ENCODE measurements at regions of chr14 and their contacts with region 1.

Region 1: GRCh38 chr14:49173765-49174373 is 412.3 kb downstream of the RPS29 start:
- DNase-seq: peak; percentile 69
- ATAC-seq: peak; percentile 91
- H3K4me3 ChIP-seq: no peak overlapping the region
- H3K27ac ChIP-seq: no peak overlapping the region
- H3K4me1 ChIP-seq: no peaks in the 10 kb centered on the region
- H3K27me3 ChIP-seq: no peaks in the 10 kb centered on the region
- CTCF ChIP-seq: peak; percentile 69
- POLR2A ChIP-seq: no peak
- RAD21 ChIP-seq: peak; percentile 79

Region 2: GRCh38 chr14:48398675-48399282 is 775.1 kb before region 1 on chr14:
- CTCF ChIA-PET with region 1: no interaction called
- POLR2A ChIA-PET with region 1: no interaction called
- dilution Hi-C with region 1: no loop called
- in situ Hi-C with region 1: no loop called
- intact Hi-C with region 1: loop called (anchors 2 kb)
- DNase-seq: peak; percentile 47
- ATAC-seq: peak; percentile 76
- H3K4me3 ChIP-seq: no peak overlapping the region
- H3K27ac ChIP-seq: no peak overlapping the region
- H3K4me1 ChIP-seq: no peaks in the 10 kb centered on the region
- H3K27me3 ChIP-seq: no peaks in the 10 kb centered on the region
- CTCF ChIP-seq: peak; percentile 59
- POLR2A ChIP-seq: no peak
- RAD21 ChIP-seq: peak; percentile 52

Region 3: GRCh38 chr14:48628870-48629269 is 545.0 kb before region 1 on chr14:
- CTCF ChIA-PET with region 1: no interaction called
- POLR2A ChIA-PET with region 1: no interaction called
- dilution Hi-C with region 1: no loop called
- in situ Hi-C with region 1: no loop called
- intact Hi-C with region 1: loop called (anchors 10 kb)
- DNase-seq: peak; percentile 28
- ATAC-seq: peak; percentile 40
- H3K4me3 ChIP-seq: no peak overlapping the region
- H3K27ac ChIP-seq: no peak overlapping the region
- H3K4me1 ChIP-seq: no peaks in the 10 kb centered on the region
- H3K27me3 ChIP-seq: no peaks in the 10 kb centered on the region
- CTCF ChIP-seq: no peak
- POLR2A ChIP-seq: no peak
- RAD21 ChIP-seq: no peak

Region 4: DNA sequence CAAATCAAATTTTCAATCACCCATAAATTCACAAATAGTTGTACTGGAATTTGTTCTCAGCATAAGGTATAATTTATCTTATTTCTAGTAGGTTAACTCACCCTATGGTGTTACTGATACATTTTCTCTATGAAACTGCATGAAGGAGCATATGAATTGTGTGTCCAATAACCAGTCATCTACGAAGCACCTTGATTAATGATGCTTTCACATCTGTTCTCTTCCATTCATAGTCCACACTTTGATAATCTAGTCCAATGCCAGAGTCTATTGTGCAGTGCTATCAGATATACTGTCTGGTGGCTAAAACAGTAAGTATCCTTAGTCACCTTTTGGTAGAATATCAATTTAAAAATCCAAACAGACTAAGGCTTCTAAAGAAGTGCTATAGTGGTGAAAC is 463.7 kb before region 1 on chr14:
- CTCF ChIA-PET with region 1: no interaction called
- POLR2A ChIA-PET with region 1: no interaction called
- dilution Hi-C with region 1: no loop called
- in situ Hi-C with region 1: no loop called
- intact Hi-C with region 1: no loop called
- DNase-seq: no peak
- ATAC-seq: no peak
- H3K4me3 ChIP-seq: no peak overlapping the region
- H3K27ac ChIP-seq: no peak overlapping the region
- H3K4me1 ChIP-seq: no peaks in the 10 kb centered on the region
- H3K27me3 ChIP-seq: no peaks in the 10 kb centered on the region
- CTCF ChIP-seq: no peak
- POLR2A ChIP-seq: no peak
- RAD21 ChIP-seq: no peak

Region 5: DNA sequence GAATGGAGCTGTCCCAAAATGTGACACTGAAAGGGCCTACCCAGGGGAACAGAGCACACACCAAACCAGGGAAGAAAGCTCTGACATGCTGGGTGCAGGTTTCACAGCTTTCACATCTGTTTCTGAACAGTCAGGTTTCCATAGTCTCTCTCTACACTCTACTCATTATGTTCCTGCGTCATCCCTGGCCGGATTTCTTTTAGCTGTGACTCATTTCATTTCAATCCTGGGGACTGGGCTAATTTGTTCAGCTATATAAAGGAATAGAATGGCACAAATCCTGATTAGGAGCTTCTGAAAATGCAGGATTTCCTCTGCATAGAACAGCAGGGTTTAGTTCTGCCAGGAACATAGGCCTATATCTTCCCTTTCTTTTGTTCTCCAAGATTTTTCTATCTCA is 237.5 kb before region 1 on chr14:
- CTCF ChIA-PET with region 1: no interaction called
- POLR2A ChIA-PET with region 1: no interaction called
- dilution Hi-C with region 1: no loop called
- in situ Hi-C with region 1: no loop called
- intact Hi-C with region 1: loop called (anchors 10 kb)
- DNase-seq: peak; percentile 77
- ATAC-seq: peak; percentile 83
- H3K4me3 ChIP-seq: no peak overlapping the region
- H3K27ac ChIP-seq: peak overlapping the region; percentile 55; the same call in 1 of the 2 replicates
- H3K4me1 ChIP-seq: 0 out of 2 replicates have a peak, but pooled peaks cover 2% of the 10 kb centered on the region
- H3K27me3 ChIP-seq: no peaks in the 10 kb centered on the region
- CTCF ChIP-seq: no peak
- POLR2A ChIP-seq: no peak
- RAD21 ChIP-seq: no peak

Region 6: GRCh38 chr14:49134940-49135339 is 38.9 kb before region 1 on chr14:
- CTCF ChIA-PET with region 1: no interaction called
- POLR2A ChIA-PET with region 1: no interaction called
- dilution Hi-C with region 1: no loop called
- in situ Hi-C with region 1: no loop called
- intact Hi-C with region 1: no loop called
- DNase-seq: no peak
- ATAC-seq: no peak
- H3K4me3 ChIP-seq: no peak overlapping the region
- H3K27ac ChIP-seq: no peak overlapping the region
- H3K4me1 ChIP-seq: no peaks in the 10 kb centered on the region
- H3K27me3 ChIP-seq: no peaks in the 10 kb centered on the region
- CTCF ChIP-seq: no peak
- POLR2A ChIP-seq: no peak
- RAD21 ChIP-seq: no peak